ENCODE measurements at regions of chr2 and their contacts with region 1.

Region 1: GRCh38 chr2:11129598-11130449 is 25.4 kb upstream of the SLC66A3 start:
- DNase-seq: no peak
- H3K4me3 ChIP-seq: peak overlapping the region; percentile 37
- H3K27me3 ChIP-seq: no peaks in the 10 kb centered on the region
- CTCF ChIP-seq: peak; percentile 27; the same call in 1 of the 2 replicates

Region 2: DNA sequence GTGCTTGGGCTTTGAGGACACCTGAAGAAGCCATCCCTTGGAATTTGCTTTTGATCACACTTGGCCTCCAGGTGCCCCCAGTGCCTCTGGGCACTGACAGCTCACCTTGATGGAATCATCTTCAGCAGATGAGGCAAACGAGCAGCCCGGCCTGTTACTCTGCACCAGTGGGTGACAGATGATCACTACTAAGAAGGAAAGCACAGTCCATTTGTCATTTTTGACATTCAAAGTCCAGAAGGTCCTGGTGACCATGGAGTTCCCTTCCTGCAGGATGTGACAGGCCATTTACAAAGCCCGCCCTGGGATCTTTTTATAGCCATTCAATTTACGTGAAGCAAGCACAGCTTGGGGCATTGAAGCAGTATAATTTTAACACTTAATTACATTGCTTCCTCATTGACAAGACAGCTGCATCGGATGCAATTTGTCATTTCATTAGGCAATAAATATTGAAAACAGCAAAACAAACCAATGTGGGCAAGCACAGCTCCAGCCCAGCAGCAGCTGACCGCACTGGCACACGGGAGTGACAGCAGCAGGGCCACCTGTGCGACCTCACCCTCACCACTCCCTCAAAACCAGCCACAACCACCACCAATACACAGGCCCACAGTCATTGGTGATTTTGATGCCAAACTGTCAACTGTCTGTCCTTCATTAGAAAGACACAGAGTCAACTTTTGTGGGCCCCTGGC is 50.5 kb before region 1 on chr2:
- CTCF ChIA-PET with region 1: no interaction called
- POLR2A ChIA-PET with region 1: no interaction called
- DNase-seq: no peak
- H3K4me3 ChIP-seq: no peak overlapping the region
- H3K27me3 ChIP-seq: no peaks in the 10 kb centered on the region
- CTCF ChIP-seq: no peak

Region 3: GRCh38 chr2:11154923-11155380 is 25.1 kb after region 1 on chr2:
- CTCF ChIA-PET with region 1: interaction called, 12 read pairs
- POLR2A ChIA-PET with region 1: no interaction called
- DNase-seq: peak; percentile 55
- H3K4me3 ChIP-seq: peak overlapping the region; percentile 27
- H3K27me3 ChIP-seq: peaks cover 4% of the 10 kb centered on the region
- CTCF ChIP-seq: no peak

Region 4: GRCh38 chr2:11411768-11412448 is 282.1 kb after region 1 on chr2:
- CTCF ChIA-PET with region 1: interaction called, 69 read pairs
- POLR2A ChIA-PET with region 1: no interaction called
- DNase-seq: no peak
- H3K4me3 ChIP-seq: no peak overlapping the region
- H3K27me3 ChIP-seq: no peaks in the 10 kb centered on the region; the same call in 1 of the 2 replicates
- CTCF ChIP-seq: peak; percentile 84

Region 5: GRCh38 chr2:11446733-11447248 is 317.0 kb after region 1 on chr2:
- CTCF ChIA-PET with region 1: interaction called, 109 read pairs
- POLR2A ChIA-PET with region 1: no interaction called
- DNase-seq: peak; percentile 2
- H3K4me3 ChIP-seq: no peak overlapping the region
- H3K27me3 ChIP-seq: no peaks in the 10 kb centered on the region
- CTCF ChIP-seq: peak; percentile 80

Region 6: GRCh38 chr2:11465497-11466406 is 335.9 kb after region 1 on chr2 and contains the start of gene E2F6:
- CTCF ChIA-PET with region 1: interaction called, 27 read pairs
- POLR2A ChIA-PET with region 1: no interaction called
- DNase-seq: peak; percentile 44
- H3K4me3 ChIP-seq: peak within 1 kb of the TSS; percentile 66
- H3K27me3 ChIP-seq: no peaks in the 10 kb centered on the region
- CTCF ChIP-seq: no peak
- polyA plus RNA-seq, gene E2F6: 4.9 and 7.9 TPM in 2 replicates

Region 7: DNA sequence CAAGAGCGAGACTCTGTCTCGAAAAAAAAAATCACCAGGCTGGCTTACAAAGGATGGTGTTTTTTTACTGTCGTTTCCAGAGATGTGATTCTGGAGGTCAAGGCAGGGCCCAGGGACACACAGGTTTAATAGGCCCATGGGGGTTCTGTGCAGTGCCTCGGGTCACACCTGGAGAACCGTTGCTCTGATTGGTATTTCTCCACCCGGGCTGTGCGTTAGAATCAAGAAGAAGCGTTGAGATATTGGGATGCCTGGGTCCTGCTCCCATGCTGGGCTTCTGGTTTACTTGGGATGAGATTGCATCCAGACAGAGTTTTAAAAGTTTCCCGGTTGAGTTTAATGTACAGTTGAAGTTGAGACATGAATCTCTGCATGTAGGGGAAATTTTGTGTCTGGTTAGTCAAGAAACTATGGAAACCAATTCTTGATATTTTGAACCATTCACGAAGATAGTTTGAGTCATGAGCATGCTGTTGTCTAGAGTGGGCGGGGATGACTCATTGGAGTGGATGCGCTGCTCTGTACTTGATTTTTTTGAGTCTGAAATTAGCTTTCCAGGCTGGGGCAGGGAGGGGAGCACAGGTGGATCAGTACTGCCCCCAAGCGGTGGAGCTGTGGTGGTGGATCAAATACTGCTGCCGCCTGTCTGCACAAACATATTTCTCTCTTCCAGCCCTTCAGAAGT is 454.2 kb after region 1 on chr2:
- CTCF ChIA-PET with region 1: interaction called, 93 read pairs
- POLR2A ChIA-PET with region 1: no interaction called
- DNase-seq: peak; percentile 82
- H3K4me3 ChIP-seq: no peak overlapping the region
- H3K27me3 ChIP-seq: peaks cover 15% of the 10 kb centered on the region
- CTCF ChIP-seq: peak; percentile 87

Measured in BJ (cell line).